ENCODE measurements at regions of chr2 and their contacts with region 1.

Region 1: GRCh38 chr2:85288244-85288725 is 39.5 kb downstream of the TGOLN2 start:
- DNase-seq: no peak
- H3K4me3 ChIP-seq: no peak overlapping the region
- H3K27ac ChIP-seq: no peak overlapping the region
- H3K4me1 ChIP-seq: no peaks in the 10 kb centered on the region
- H3K27me3 ChIP-seq: no peaks in the 10 kb centered on the region
- CTCF ChIP-seq: no peak

Region 2: GRCh38 chr2:84925724-84926376 is 362.4 kb before region 1 on chr2:
- intact Hi-C with region 1: loop called (anchors 10 kb)
- DNase-seq: peak; percentile 100
- H3K4me3 ChIP-seq: peak overlapping the region; percentile 29
- H3K27ac ChIP-seq: peak overlapping the region; percentile 46
- H3K4me1 ChIP-seq: no peaks in the 10 kb centered on the region
- H3K27me3 ChIP-seq: no peaks in the 10 kb centered on the region
- CTCF ChIP-seq: peak; percentile 99

Region 3: DNA sequence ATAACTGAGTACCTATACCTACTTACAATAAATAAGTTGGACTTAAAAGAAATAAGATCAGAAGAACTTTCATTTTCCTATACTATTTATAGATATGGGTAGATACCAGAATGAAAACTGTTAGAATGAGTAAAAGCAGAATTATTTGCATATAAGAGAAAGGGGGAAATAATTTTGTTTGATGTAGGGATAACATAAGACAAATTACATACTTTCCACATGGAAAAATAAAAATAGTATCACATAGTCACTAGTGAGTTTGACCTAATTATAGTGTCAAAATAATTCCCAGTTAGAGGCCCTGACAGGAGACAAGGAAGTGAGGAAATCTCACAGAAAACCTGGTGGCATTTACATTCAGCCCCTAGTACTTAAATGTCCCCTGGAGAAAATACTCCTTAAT is 288.7 kb before region 1 on chr2:
- intact Hi-C with region 1: no loop called
- DNase-seq: no peak
- H3K4me3 ChIP-seq: no peak overlapping the region
- H3K27ac ChIP-seq: no peak overlapping the region
- H3K4me1 ChIP-seq: no peaks in the 10 kb centered on the region
- H3K27me3 ChIP-seq: no peaks in the 10 kb centered on the region
- CTCF ChIP-seq: no peak

Region 4: GRCh38 chr2:85132834-85133637 is 155.2 kb before region 1 on chr2 and contains the start of gene TCF7L1:
- intact Hi-C with region 1: loop called (anchors 5 kb)
- DNase-seq: peak; percentile 65
- H3K4me3 ChIP-seq: peak within 1 kb of the TSS; percentile 46
- H3K27ac ChIP-seq: no peak within 1 kb of the TSS
- H3K4me1 ChIP-seq: no peaks in the 10 kb centered on the region
- H3K27me3 ChIP-seq: peaks cover 22% of the 10 kb centered on the region
- CTCF ChIP-seq: peak; percentile 47
- total RNA-seq, gene TCF7L1: 0.99 to 3.2 TPM

Region 5: GRCh38 chr2:85712849-85713602 is 424.7 kb after region 1 on chr2:
- intact Hi-C with region 1: no loop called
- DNase-seq: no peak
- H3K4me3 ChIP-seq: no peak overlapping the region
- H3K27ac ChIP-seq: no peak overlapping the region
- H3K4me1 ChIP-seq: no peaks in the 10 kb centered on the region
- H3K27me3 ChIP-seq: no peaks in the 10 kb centered on the region
- CTCF ChIP-seq: no peak

Measured in colonic mucosa (tissue), 4 donors.